ENCODE measurements at regions of chr19 and their contacts with region 1.

Region 1: GRCh38 chr19:38899447-38900219 is at the starts of genes NFKBIB and SIRT2:
- H3K4me3 ChIP-seq: peak within 1 kb of the TSS; percentile 58
- H3K27ac ChIP-seq: peak within 1 kb of the TSS; percentile 85
- H3K4me1 ChIP-seq: peaks cover 21% of the 10 kb centered on the region
- CTCF ChIP-seq: peak; percentile 59; the same call in 1 of the 2 replicates

Region 2: DNA sequence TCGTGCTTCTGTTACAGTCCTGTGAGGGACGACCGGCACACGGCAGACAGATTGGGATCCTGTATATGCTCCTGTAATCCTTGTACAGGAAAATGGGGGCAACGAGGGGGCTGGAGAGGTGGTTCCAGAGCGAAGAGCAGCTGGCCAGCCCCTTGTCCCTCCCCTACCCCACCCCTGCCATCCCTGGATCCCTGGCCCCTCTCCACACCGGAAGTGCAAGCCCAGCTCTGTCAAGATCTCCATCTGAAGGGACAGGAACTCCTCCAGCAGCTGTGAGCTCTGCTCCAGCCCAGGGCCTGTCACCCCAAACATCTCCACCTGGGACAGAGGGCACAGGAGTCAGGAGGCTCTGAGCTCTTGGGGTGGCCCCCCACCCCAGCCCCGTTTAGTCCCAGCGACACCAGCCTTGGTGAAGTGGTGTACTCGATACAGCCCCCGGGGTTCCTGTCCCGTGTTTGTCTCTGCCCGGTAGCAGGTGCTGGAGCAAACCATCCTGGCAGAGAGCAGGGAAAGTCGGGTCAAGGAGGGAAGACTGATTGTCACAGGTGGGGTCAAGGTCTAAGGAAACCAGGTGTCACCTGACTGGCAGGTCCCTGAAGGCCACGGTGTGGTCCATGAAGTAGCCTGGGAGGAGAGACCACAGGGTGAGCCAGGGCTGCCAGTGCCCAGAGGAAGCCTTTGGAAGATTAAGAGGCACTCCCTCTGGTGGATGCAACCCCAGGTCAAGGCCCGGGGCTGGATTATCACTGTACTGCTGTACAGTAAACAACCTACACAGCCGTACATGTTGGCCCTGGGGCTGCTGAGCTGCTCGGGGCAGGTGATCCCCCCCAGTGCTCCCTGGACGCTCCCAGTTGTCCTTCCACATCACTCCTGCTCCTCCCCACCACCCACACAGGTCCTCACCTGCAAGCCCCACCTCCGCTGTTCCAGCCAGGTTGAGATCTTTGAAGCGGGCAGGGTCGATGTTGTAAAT is 18.2 kb after region 1 on chr19:
- CTCF ChIA-PET with region 1: interaction called, 3 read pairs
- POLR2A ChIA-PET with region 1: interaction called, 11 read pairs
- H3K4me3 ChIP-seq: no peak overlapping the region
- H3K27ac ChIP-seq: peak overlapping the region; percentile 17; the same call in 1 of the 2 replicates
- H3K4me1 ChIP-seq: no peaks in the 10 kb centered on the region
- CTCF ChIP-seq: peak; percentile 62

Measured in HEK293 (cell line).